Ascending aorta (tissue), 2 donors: ENCODE measurements at regions of chr10 and their contacts with region 1.

Region 1: GRCh38 chr10:3452173-3452626 is 279.6 kb upstream of the PITRM1 start:
- DNase-seq: peak in 1 of 2 donors; percentile 71
- H3K4me3 ChIP-seq: peak overlapping the region in 1 of 2 donors; percentile 3
- H3K27ac ChIP-seq: peak overlapping the region; percentile 76 to 80
- H3K4me1 ChIP-seq: peaks cover 4 to 15% of the 10 kb centered on the region in 2 donors
- H3K27me3 ChIP-seq: no peaks in the 10 kb centered on the region
- CTCF ChIP-seq: peak; percentile 35 to 49 (median 49)

Region 2: DNA sequence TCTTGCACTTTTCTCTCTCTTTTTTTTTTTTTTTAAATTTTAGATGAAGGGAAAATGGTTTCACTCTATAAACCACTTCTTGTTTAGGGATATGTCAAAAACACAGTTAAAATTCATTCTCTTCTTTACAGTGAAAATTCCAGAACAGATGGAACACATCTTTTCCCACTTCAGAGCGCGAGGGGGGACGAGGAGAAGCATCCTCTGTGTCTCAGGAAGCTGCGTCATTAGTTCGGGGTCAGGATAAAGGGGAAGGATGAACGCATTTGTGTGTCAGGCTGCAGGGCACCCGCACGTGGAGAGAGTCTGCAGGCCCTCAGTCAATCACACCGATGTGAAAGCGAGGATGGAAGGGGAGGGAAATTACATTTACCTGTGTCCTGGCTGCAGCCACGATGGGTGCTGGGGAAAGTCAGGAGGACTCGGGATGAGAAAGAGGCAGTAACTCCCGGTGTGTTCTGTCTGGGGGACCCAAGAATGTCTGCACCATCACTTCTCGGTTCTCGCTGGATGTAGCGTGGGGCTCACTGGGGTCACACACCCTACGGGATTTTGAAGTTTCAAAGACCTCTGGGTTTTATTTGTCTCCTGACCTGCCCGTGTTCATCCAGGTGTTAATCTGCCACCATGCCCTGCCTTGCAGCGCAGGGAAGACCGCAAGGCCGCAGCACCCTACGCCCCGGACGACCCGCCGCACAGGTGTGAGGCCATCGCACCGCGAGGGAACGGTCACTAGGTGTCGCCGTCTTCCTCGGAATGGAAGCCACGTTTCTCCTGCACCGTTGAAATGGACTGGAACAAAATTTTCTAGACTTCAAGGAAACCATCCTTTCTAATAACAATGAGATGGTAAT is 212.9 kb before region 1 on chr10:
- intact Hi-C with region 1: loop called (anchors 5 kb)
- DNase-seq: peak in 1 of 2 donors; percentile 83
- H3K4me3 ChIP-seq: no peak overlapping the region
- H3K27ac ChIP-seq: peak overlapping the region in 1 of 2 donors; percentile 54
- H3K4me1 ChIP-seq: peaks cover 0 to 6% of the 10 kb centered on the region in 2 donors
- H3K27me3 ChIP-seq: no peaks in the 10 kb centered on the region
- CTCF ChIP-seq: peak; percentile 89 to 97 (median 90)